CD4-positive, alpha-beta memory T cell (primary cell): ENCODE measurements at regions of chr10 and their contacts with region 1.

Region 1: DNA sequence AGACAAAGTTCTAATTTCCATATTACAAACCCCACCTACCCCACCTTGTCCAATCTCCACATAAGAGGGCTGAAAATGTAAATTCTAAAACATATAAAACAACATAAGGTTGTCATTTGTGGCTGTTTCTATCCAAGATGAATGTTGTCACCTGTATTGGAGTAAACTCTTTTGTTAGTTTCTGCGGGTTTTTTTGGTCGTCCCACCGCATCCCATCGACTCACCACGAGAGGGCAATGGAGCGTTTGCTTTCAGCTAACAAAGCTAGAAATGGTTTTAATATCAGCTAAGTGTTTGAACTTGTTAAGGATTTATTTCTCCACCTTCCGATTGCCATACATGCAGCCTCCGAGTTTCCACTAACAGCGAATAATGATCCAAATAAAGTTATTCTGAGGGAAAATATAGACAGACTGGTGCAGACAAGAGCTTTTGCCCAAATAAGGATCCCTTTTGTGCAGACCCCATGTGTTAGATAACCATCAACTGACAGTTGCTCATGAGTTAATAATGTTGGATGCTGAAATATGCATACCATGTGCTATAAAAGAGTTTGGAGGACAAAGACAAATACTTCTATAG is 137.2 kb downstream of the ARID5B start:
- DNase-seq: peak; percentile 74 to 81 (median 76)
- H3K4me3 ChIP-seq: peak overlapping the region in 1 of 2 donors; percentile 34
- H3K4me3 Mint-ChIP-seq: peak overlapping the region; percentile 48 to 89 (median 82)
- H3K27ac ChIP-seq: no peak overlapping the region
- H3K27ac Mint-ChIP-seq: peak overlapping the region; percentile 53 to 93 (median 78)
- H3K4me1 ChIP-seq: peaks cover 74% of the 10 kb centered on the region
- H3K4me1 Mint-ChIP-seq: peaks cover 60 to 78% (median 68%) of the 10 kb centered on the region in 4 donors
- H3K27me3 ChIP-seq: no peaks in the 10 kb centered on the region
- H3K27me3 Mint-ChIP-seq: no peaks in the 10 kb centered on the region

Region 2: DNA sequence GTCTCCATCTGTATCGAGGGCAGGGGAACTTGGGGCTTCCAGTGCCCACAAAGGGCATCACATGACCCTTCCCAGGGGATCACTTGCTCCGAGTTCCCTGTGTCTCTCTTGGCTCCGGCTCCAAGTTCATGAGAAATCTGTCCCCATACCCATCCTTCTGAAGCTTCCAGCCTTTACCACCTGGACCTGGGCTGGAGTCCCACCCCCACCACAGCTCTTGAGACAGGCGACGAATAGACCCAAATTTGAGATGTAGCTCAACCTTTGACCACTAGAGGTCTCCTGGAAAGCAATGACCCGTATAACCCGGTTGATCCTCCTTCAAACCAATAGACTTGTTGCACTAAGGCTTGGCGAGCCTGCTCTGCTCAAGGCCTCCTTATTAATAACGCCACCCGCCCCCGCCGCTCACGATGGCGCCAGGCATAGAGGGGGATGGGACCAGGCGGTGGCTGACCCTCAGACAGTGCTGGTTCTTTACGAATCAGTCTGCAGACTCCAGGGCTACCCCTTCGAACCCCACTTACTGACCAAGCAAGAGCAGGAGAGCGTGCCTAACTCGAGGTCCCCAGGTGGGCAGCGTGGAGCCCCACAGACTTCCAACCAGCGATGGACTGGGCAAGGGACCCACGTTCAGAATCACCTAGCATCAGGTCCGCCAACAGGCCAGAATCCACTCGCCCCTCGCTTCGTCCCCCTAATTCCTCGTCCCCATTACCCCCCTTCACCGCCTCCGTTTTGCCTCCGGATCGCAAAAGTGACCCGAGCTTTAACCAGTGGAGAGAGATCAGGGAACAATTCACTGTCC is 141.6 kb before region 1 on chr10:
- CTCF ChIA-PET with region 1: interaction called, 228 read pairs
- POLR2A ChIA-PET with region 1: interaction called, 251 read pairs
- intact Hi-C with region 1: loop called (anchors 1 kb)
- DNase-seq: peak; percentile 71 to 78 (median 74)
- H3K4me3 ChIP-seq: peak overlapping the region; percentile 7 to 40
- H3K4me3 Mint-ChIP-seq: peak overlapping the region; percentile 67 to 97 (median 84)
- H3K27ac ChIP-seq: no peak overlapping the region
- H3K27ac Mint-ChIP-seq: peak overlapping the region; percentile 13 to 94 (median 92)
- H3K4me1 ChIP-seq: peaks cover 31% of the 10 kb centered on the region
- H3K4me1 Mint-ChIP-seq: peaks cover 18 to 41% (median 26%) of the 10 kb centered on the region in 4 donors
- H3K27me3 ChIP-seq: no peaks in the 10 kb centered on the region
- H3K27me3 Mint-ChIP-seq: no peaks in the 10 kb centered on the region

Region 3: DNA sequence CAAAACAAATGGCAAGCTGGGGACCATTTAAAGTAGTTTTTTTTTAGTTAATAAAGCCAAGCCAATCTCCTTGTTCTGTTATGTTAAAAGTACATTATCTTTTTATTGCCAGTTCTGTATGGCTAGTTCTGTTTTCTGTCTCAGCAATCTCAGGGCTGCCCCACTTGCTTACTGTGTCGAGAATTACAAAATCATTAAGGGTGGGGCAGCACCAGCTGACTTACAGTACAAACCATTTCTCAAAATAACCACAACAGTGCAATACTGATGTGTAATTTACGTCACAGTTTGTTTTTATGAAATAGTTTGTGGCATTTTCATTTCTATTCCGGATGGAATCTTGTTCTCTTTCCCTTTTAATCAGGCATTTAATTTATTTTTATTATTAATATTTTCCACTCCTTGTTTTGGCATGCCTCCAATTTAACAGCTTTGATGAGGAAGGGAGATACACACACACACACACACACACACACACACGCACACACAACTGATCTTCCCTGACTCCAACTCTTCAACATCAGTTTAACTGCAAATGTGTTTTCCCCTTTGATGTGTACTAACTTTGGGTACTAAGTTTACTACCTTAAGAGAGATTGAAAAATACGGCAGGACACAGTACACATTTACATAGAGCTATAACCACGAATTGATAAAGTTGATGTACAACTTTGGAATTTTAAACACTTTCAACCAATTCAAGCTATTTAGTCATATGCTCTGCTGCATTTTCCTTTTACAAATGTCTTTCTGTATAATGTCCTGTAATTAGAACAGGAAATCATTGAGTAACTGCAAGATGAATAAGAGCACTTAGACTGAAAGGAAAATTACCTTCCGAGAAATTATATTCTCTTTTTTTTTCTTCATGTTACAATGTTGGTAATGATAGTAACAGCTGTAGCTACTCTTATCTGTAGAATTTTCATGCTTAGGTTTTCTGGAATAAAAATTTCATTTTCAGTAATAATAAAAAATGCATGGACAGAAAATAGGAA is 45.7 kb before region 1 on chr10:
- CTCF ChIA-PET with region 1: interaction called, 15 read pairs
- POLR2A ChIA-PET with region 1: interaction called, 8 read pairs
- intact Hi-C with region 1: no loop called
- DNase-seq: peak; percentile 79 to 88 (median 84)
- H3K4me3 ChIP-seq: peak overlapping the region; percentile 9 to 39
- H3K4me3 Mint-ChIP-seq: peak overlapping the region; percentile 47 to 81 (median 74)
- H3K27ac ChIP-seq: peak overlapping the region; percentile 60
- H3K27ac Mint-ChIP-seq: peak overlapping the region; percentile 87 to 98 (median 94)
- H3K4me1 ChIP-seq: peaks cover 71% of the 10 kb centered on the region
- H3K4me1 Mint-ChIP-seq: peaks cover 52 to 72% (median 56%) of the 10 kb centered on the region in 4 donors
- H3K27me3 ChIP-seq: no peaks in the 10 kb centered on the region
- H3K27me3 Mint-ChIP-seq: peaks cover 0 to 3% of the 10 kb centered on the region in 2 donors

Region 4: DNA sequence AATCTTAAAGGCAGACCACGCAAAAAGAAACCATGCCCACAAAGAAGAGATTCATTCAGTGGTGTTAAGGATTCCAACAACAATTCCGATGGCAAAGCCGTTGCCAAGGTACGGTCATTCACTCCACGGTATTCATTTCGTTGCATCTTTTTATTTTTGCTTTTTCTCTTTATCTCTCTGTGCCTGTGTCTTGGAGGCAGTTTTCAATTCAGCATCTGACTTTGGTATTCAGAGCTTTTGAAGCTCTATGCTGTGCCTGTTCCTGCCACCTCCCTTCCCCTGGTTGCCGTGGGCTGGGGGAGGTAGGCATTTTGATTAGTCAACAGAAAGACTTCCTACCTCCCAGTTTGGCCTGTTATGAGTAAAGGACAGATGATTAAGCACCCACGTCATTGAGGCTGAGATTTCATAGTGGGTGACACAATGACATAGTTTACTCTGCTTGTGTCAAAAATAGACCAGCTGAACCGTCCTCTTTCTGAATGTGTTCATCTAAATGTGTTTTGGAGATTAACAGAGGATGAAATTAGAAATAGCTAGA is 12.3 kb after region 1 on chr10:
- CTCF ChIA-PET with region 1: interaction called, 69 read pairs
- POLR2A ChIA-PET with region 1: interaction called, 86 read pairs
- intact Hi-C with region 1: loop called (anchors 1 kb)
- DNase-seq: peak; percentile 83 to 94 (median 88)
- H3K4me3 ChIP-seq: peak overlapping the region; percentile 69 to 82
- H3K4me3 Mint-ChIP-seq: peak overlapping the region; percentile 89 to 98 (median 91)
- H3K27ac ChIP-seq: peak overlapping the region; percentile 87
- H3K27ac Mint-ChIP-seq: peak overlapping the region; percentile 92 to 100 (median 98)
- H3K4me1 ChIP-seq: peaks cover 78% of the 10 kb centered on the region
- H3K4me1 Mint-ChIP-seq: peaks cover 67 to 98% (median 76%) of the 10 kb centered on the region in 4 donors
- H3K27me3 ChIP-seq: no peaks in the 10 kb centered on the region
- H3K27me3 Mint-ChIP-seq: no peaks in the 10 kb centered on the region

Region 5: GRCh38 chr10:62076891-62077290 is 38.2 kb after region 1 on chr10:
- CTCF ChIA-PET with region 1: interaction called, 22 read pairs
- POLR2A ChIA-PET with region 1: interaction called, 133 read pairs
- intact Hi-C with region 1: loop called (anchors 1 kb)
- DNase-seq: peak in 1 of 5 donors; percentile 24
- H3K4me3 ChIP-seq: no peak overlapping the region
- H3K4me3 Mint-ChIP-seq: peak overlapping the region; percentile 3 to 71 (median 30)
- H3K27ac ChIP-seq: no peak overlapping the region
- H3K27ac Mint-ChIP-seq: peak overlapping the region; percentile 11 to 94 (median 77)
- H3K4me1 ChIP-seq: peaks cover 84% of the 10 kb centered on the region
- H3K4me1 Mint-ChIP-seq: peaks cover 56 to 93% (median 72%) of the 10 kb centered on the region in 4 donors
- H3K27me3 ChIP-seq: no peaks in the 10 kb centered on the region
- H3K27me3 Mint-ChIP-seq: no peaks in the 10 kb centered on the region

Region 6: DNA sequence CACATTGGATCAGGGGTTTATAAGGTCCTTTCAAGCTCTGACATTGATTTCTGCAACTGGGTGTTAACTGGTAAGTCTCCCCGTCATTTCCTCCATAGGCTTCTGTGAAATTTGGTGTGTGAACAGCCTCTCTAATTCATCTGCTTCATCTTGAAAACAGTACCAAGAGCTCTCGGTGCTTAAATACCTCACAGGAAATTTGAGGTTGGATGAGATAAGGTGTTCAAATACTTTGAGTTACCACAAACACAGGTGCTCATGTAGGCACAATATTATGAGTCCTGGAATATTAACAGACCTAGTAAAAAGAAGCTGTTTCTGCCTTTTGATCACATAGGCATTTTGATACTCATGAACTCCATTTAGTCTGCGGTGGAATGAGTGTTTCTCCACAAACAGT is 144.7 kb after region 1 on chr10:
- CTCF ChIA-PET with region 1: interaction called, 12 read pairs
- POLR2A ChIA-PET with region 1: interaction called, 19 read pairs
- intact Hi-C with region 1: no loop called
- DNase-seq: peak; percentile 81 to 92 (median 88)
- H3K4me3 ChIP-seq: no peak overlapping the region
- H3K4me3 Mint-ChIP-seq: peak overlapping the region in 7 of 8 donors; percentile 24 to 65 (median 51)
- H3K27ac ChIP-seq: peak overlapping the region; percentile 42
- H3K27ac Mint-ChIP-seq: peak overlapping the region; percentile 83 to 95 (median 92)
- H3K4me1 ChIP-seq: peaks cover 71% of the 10 kb centered on the region
- H3K4me1 Mint-ChIP-seq: peaks cover 57 to 84% (median 77%) of the 10 kb centered on the region in 4 donors
- H3K27me3 ChIP-seq: no peaks in the 10 kb centered on the region
- H3K27me3 Mint-ChIP-seq: no peaks in the 10 kb centered on the region

Region 7: DNA sequence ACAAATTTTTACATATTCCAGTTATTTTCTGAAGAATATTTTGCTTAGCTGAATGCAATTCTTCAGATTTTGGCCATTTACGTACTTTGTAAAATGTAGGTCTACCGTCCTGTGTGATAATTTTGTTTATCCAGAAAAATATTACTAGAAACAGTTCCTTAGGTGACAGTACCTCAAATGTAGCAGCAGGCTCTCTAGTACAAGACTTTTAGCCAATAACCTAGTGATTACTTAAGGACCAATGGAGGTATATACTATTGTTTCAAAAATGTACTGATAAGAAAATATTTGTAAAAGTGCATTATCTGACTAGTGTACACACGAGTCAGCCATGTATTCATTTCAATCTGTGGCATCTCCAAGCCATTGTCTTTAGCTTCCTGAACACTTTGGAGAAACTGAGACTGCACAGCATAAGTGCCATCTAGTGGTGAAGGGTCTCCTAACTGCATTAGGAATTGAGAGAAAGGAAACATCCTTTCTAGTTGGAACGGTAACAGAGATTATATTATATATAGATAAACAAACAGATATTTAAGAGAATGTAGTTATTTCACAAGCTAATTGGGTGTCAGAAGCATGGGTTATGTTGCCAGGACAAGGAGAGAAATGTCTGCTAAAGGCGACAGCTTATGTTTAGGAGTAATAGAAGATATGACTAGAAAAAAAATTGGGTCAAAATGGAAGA is 206.2 kb after region 1 on chr10:
- CTCF ChIA-PET with region 1: interaction called, 300 read pairs
- POLR2A ChIA-PET with region 1: interaction called, 52 read pairs
- intact Hi-C with region 1: loop called (anchors 1 kb)
- DNase-seq: peak; percentile 52 to 68 (median 65)
- H3K4me3 ChIP-seq: no peak overlapping the region
- H3K4me3 Mint-ChIP-seq: peak overlapping the region in 6 of 8 donors; percentile 22 to 62 (median 42)
- H3K27ac ChIP-seq: no peak overlapping the region
- H3K27ac Mint-ChIP-seq: peak overlapping the region in 4 of 7 donors; percentile 11 to 70 (median 37)
- H3K4me1 ChIP-seq: peaks cover 37% of the 10 kb centered on the region
- H3K4me1 Mint-ChIP-seq: peaks cover 22 to 35% (median 25%) of the 10 kb centered on the region in 4 donors
- H3K27me3 ChIP-seq: no peaks in the 10 kb centered on the region
- H3K27me3 Mint-ChIP-seq: peaks cover 0 to 1% of the 10 kb centered on the region in 2 donors